Right ventricle myocardium inferior (tissue), 1 donor: ENCODE measurements at regions of chr1 and their contacts with region 1.

Region 1: DNA sequence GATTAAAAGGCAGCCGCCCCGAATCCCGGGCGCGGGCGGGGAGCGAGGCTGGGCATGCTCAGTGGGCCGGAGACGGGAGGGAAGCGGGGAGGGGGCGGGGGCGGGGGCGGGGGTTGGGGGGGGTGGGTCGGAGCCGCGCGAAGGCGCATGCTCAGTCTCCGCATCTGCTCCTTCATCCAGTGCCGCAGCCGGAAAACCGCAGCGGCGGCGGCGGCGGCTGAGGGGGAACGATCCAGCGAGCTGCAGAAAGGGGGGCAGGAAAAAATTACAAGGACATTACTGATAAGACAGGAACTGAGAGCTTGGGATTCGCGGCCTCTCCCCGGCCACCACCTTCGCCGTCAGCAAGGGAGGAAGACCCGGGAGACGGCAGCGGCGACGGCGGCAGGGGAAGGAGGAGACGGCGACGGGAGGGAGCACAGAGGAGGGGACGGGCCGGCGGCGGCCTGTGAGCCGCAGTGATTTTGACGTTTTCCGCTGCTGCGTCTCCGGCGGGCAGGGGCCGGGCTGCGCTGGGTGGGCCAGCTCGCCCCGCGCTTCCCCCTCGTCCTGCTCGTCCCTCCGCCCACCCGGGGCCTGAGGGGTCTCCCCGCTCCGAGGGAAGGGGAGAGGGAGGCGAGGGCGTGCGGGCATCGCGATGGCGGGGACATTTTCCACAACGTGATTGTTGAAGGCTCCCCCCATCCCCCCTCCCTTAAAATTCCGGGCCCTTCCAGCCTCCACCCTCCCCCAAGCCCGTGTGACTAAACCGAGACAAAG is at the start of gene CAMSAP2:
- DNase-seq: peak; percentile 93
- ATAC-seq: peak; percentile 92
- total RNA-seq, gene CAMSAP2: 37.4 TPM

Region 2: DNA sequence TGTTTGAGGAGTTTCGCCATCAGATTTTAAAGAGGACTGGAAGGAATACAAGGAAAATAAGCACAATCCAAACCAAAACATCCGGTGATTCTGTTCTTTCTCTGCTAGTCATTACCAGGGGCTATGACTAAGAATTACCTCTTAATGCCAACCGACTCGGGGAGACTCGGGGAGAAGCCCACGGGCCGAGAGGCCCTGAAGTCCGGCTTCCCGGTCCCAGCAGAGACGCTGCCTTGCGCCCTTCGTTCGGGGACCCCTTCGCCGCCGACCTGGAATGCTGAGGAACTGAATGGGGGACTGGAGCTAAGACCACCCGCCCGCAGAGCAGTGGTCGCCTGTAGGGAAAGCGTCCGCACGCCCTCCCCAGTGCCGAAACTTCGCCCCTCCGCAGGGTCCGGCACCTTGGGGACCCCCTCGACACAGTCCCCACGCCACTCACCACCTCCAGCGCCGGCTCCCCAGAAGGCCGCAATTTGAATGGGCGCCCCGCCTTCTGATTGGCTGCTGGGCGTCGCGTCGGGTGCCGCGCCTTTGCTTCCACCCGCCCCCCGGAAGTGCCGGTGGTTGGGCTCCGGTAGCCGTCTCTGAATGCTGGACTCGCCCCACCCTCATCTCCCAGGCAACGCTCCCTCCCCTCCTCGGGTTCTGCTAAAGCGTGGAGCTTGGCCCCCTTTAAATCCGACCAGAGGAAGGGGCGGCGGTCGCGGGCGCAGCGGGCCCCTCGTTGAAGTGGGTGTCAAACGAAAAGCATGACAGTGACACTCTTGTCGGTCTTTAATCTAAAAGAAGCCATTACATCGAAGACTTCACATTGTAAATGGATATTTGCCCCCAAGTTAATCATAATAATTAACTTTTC is 118.4 kb before region 1 on chr1 and contains the start of gene KIF14:
- intact Hi-C with region 1: loop called (anchors 1 kb)
- DNase-seq: peak; percentile 97
- ATAC-seq: peak; percentile 99
- total RNA-seq, gene KIF14: 0.11 TPM

Region 3: DNA sequence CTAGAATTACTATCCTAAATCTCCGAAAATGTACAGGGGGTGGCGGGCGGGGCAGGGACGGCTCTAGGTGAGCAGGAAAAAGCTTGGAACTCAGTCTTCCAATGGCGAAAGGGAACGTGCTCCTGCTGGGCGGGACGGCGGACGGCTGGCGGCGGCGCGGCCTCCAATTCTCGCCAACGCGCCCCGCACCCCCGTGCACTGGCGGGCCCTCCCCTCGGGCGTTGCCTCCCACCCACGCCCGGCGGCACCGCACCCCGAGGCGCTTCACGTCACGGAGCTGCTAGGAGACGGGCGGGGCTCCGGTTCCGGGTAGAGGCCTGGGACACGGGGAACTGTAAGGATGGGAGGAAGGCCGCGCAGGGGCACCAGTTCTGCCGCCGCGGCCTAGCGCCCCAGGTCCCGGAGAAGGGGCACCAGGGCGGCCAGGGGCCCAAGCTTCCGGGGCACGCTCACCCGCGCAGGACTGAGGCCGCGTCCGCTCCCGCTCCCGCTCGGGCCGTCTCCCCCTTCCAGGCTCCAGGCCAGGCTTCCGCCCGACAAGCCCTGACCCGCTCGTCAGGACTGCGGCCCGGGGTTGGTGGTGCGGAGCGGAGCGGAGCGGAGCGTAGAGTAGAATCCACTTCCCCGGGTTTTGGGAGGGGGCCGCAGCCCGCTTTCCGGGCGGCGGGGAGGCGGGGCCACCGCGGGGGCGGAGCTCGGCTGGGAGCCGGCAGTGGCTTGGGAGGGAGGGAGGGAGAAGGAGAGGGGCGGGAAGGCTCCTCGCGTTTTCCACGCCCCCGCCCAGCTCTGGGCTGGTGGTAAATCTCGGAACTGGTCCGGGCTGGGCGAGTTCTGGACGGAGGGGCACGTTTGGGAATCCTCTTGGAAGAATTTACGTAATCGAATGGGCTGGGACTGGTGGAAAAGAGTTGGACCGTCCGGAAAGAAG is 69.3 kb before region 1 on chr1 and contains the start of gene DDX59:
- intact Hi-C with region 1: loop called (anchors 1 kb)
- DNase-seq: peak; percentile 98
- ATAC-seq: peak; percentile 95
- total RNA-seq, gene DDX59: 12.7 TPM

Region 4: GRCh38 chr1:200780545-200781369 is 41.8 kb after region 1 on chr1:
- intact Hi-C with region 1: loop called (anchors 2 kb)
- DNase-seq: no peak
- ATAC-seq: no peak

Region 5: GRCh38 chr1:200802865-200803512 is 64.1 kb after region 1 on chr1:
- intact Hi-C with region 1: loop called (anchors 2 kb)
- DNase-seq: peak; percentile 72
- ATAC-seq: peak; percentile 76